ENCODE measurements at regions of chr1 and their contacts with region 1.

Region 1: DNA sequence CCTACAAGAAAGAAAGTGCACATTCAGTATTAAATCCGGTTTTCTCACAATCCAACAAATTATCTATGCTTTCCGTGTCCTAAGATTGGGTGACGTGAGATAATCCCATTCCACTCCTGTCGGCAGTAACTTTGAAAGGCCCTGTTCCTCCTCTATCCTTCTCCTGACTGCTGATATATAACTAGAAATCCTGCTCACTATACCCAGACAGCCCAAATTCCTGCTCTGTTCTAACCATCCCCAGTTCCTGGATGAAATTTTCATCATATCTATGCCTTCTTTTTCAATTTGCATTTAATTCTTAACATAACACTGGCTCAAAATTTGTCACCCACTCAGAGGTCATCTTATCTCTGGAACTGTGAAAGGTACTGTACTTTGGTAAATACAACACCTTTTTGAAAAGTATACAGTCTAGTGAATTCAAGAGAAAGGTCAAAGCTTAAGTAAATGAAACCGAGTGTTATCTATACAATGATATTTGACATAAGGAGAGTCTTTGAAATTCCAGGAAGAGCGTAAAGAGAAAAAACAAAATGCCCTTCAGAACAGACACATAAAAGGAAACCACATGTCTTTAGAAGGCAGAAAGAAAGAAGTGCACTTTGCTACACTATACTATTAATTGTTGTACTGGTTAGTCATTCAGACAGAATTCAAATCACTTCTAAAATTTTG is 200.5 kb upstream of the NEGR1 start:
- DNase-seq: peak in 1 of 2 experiments; percentile 5
- H3K4me3 ChIP-seq: no peak overlapping the region
- H3K4me3 Mint-ChIP-seq: peak overlapping the region; percentile 8
- H3K27ac Mint-ChIP-seq: no peak overlapping the region
- H3K4me1 ChIP-seq: peaks cover 8% of the 10 kb centered on the region
- H3K4me1 Mint-ChIP-seq: peaks cover 7% of the 10 kb centered on the region
- H3K27me3 ChIP-seq: no peaks in the 10 kb centered on the region
- H3K27me3 Mint-ChIP-seq: no peaks in the 10 kb centered on the region
- CTCF ChIP-seq: no peak

Region 2: DNA sequence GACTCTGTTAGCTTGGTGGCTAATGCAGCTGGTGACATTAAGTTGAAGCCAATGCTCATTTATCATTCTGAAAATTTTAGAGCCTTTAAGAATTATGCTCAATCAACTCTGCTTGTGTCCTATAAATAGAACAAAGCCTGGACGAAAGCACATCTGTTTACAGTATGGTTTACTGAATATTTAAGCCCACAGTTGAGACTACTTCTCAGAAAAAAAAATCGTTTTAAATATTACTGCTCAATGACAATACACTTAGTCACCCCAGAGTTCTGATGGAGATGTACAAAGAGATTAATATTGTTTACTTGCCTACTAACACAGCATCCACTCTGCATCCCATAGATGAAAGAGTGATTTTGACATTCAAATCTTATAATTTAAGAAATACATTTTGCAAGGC is 280.1 kb before region 1 on chr1:
- CTCF ChIA-PET with region 1: no interaction called
- POLR2A ChIA-PET with region 1: no interaction called
- intact Hi-C with region 1: loop called (anchors 1 kb)
- DNase-seq: no peak
- H3K4me3 ChIP-seq: no peak overlapping the region
- H3K4me3 Mint-ChIP-seq: no peak overlapping the region
- H3K27ac Mint-ChIP-seq: no peak overlapping the region
- H3K4me1 ChIP-seq: peaks cover 13% of the 10 kb centered on the region; the same call in 1 of the 2 replicates
- H3K4me1 Mint-ChIP-seq: peaks cover 8% of the 10 kb centered on the region
- H3K27me3 ChIP-seq: no peaks in the 10 kb centered on the region
- H3K27me3 Mint-ChIP-seq: no peaks in the 10 kb centered on the region
- CTCF ChIP-seq: no peak

Region 3: GRCh38 chr1:72606216-72606810 is 123.4 kb after region 1 on chr1:
- CTCF ChIA-PET with region 1: no interaction called
- POLR2A ChIA-PET with region 1: no interaction called
- intact Hi-C with region 1: no loop called
- DNase-seq: no peak
- H3K4me3 ChIP-seq: no peak overlapping the region
- H3K4me3 Mint-ChIP-seq: no peak overlapping the region
- H3K27ac Mint-ChIP-seq: no peak overlapping the region
- H3K4me1 ChIP-seq: no peaks in the 10 kb centered on the region
- H3K4me1 Mint-ChIP-seq: no peaks in the 10 kb centered on the region
- H3K27me3 ChIP-seq: no peaks in the 10 kb centered on the region
- H3K27me3 Mint-ChIP-seq: no peaks in the 10 kb centered on the region
- CTCF ChIP-seq: no peak

Region 4: GRCh38 chr1:72705921-72706320 is 223.0 kb after region 1 on chr1:
- CTCF ChIA-PET with region 1: no interaction called
- POLR2A ChIA-PET with region 1: no interaction called
- intact Hi-C with region 1: no loop called
- DNase-seq: no peak
- H3K4me3 ChIP-seq: no peak overlapping the region
- H3K4me3 Mint-ChIP-seq: no peak overlapping the region
- H3K27ac Mint-ChIP-seq: no peak overlapping the region
- H3K4me1 ChIP-seq: no peaks in the 10 kb centered on the region
- H3K4me1 Mint-ChIP-seq: no peaks in the 10 kb centered on the region
- H3K27me3 ChIP-seq: no peaks in the 10 kb centered on the region
- H3K27me3 Mint-ChIP-seq: no peaks in the 10 kb centered on the region
- CTCF ChIP-seq: no peak

Measured in Caco-2 (cell line).